Left ventricle myocardium inferior (tissue), 1 donor: ENCODE measurements at regions of chr3 and their contacts with region 1.

Region 1: DNA sequence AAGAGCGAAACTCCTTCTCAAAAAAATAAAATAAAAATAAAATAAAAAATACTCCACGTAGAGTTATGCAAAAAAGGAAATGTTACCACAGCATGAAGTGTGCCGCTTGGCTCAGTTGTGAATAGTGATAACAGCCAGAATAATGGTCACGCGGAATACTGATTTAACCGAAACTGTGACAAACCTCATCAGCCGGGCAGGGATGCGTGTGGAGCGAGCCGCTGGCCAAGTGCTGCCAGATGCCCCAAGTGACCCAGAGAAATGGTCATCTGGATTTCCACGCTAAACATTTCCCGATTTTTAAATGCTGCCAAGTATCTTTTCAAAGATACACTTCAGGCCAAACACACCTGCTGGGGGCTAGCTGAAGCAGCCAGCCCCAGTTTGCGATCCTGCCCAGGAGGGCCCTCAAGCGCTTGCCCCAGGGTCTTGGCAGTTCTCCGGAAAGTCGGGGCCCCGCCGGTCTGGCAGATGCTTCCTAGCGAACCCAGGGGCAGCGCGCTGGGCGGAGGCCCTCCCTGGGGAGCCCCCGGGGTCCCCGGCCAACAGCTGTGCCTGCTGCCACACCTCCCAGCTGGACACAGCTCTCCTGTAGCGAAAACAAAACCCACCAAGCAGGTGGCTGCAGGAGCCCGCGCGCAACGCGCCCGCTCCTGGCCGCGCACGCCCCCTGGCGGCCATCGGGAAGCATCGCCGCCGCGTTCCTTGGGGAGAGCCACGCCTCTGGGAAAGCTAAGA is 35.1 kb downstream of the CMTM6 start:
- DNase-seq: peak; percentile 66
- H3K4me3 ChIP-seq: peak overlapping the region; percentile 62
- H3K27ac ChIP-seq: peak overlapping the region; percentile 56
- H3K4me1 ChIP-seq: peaks cover 19% of the 10 kb centered on the region
- H3K27me3 ChIP-seq: no peaks in the 10 kb centered on the region
- CTCF ChIP-seq: peak; percentile 99

Region 2: DNA sequence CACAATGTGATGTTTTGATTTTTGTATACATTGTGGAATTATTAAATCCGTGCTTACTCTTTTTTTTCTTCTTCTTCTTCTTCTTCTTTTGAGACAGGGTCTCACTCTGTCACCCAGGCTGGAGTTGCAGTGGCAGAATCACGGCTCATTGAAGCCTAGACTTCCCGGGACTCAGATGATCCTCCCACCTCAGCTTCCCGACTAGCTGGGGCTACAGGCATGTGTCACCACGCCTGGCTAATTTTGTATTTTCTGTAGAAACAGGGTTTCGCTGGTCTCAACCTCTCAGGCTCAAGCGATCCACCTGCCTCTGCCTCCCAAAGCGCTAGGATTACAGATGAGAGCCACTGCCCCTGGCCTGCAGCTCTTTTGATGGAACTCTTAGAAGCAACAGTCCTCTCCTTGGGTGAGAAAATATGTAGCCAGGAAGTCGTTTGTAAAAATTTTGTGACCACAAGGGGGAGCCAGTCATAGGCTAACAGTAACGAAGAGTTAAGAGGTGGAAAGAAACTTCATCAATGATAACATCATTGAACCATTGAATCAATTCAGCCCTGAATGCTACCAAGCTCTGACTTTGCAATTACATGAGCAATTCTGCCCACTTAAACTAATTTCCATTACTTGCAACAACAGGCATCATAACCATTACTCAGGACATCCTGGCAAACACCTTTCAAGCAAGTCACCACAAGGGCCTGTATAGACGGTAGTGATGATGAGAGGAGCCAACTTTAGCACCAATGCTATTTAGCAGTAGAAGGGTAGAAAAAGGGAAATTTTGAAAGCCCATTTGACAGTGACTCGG is 92.5 kb before region 1 on chr3:
- intact Hi-C with region 1: loop called (anchors 5 kb)
- DNase-seq: no peak
- H3K4me3 ChIP-seq: no peak overlapping the region
- H3K27ac ChIP-seq: no peak overlapping the region
- H3K4me1 ChIP-seq: no peaks in the 10 kb centered on the region
- H3K27me3 ChIP-seq: no peaks in the 10 kb centered on the region
- CTCF ChIP-seq: peak; percentile 74